ENCODE measurements at regions of chr1 and their contacts with region 1.

Region 1: DNA sequence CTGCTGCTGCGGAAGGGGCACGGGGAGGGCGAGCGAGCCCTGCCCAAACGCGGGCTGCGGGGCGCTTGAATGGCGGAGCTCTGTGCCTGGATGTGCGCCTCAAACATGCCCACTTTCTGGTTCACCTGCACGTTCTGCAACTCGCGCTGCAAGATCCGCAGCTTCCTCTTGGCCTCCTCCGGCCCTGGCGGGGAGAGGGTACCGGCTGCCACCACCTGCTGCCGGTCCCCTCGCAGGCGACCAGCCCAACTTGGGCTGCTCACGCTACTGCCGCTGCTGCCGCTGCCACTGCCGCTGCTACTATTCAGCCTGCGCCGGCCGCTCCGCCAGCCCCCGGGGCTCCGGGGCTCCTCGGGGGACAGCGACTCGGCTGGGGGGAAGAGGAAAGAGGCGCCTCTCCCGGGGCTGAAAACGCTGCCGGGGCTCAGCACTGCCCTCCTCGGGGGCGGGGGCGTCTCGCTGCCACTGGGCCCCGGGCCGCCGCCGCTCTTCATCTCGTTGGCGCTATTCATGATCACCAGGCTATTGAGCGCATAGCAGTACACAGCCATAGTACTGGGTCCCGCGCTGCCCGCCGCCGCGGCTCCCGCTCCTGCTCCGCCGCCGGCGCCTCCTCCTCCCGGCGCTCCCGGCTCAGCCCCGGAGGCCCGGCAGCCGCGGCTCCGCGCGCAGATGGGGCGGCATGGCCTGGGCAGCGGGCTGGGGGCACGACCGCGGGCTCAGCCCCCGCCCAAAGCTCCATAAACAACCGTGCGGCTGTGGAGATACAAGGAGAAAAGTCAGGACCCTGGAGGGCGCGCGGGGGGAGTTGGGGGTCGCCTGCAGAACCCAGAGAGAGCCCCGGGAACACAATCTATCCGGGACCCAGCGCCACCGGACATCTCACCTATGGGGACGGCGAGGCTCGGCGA is 1.9 kb downstream of the ITPKB start:
- DNase-seq: peak; percentile 43
- H3K4me3 ChIP-seq: peak overlapping the region; percentile 77
- H3K27ac ChIP-seq: peak overlapping the region; percentile 79
- H3K4me1 ChIP-seq: no peaks in the 10 kb centered on the region
- H3K27me3 ChIP-seq: no peaks in the 10 kb centered on the region
- CTCF ChIP-seq: no peak

Region 2: GRCh38 chr1:226547754-226548191 is 189.4 kb before region 1 on chr1:
- intact Hi-C with region 1: no loop called
- DNase-seq: peak; percentile 84
- H3K4me3 ChIP-seq: no peak overlapping the region
- H3K27ac ChIP-seq: no peak overlapping the region
- H3K4me1 ChIP-seq: peaks cover 23% of the 10 kb centered on the region
- H3K27me3 ChIP-seq: peaks cover 16% of the 10 kb centered on the region
- CTCF ChIP-seq: peak; percentile 73

Region 3: DNA sequence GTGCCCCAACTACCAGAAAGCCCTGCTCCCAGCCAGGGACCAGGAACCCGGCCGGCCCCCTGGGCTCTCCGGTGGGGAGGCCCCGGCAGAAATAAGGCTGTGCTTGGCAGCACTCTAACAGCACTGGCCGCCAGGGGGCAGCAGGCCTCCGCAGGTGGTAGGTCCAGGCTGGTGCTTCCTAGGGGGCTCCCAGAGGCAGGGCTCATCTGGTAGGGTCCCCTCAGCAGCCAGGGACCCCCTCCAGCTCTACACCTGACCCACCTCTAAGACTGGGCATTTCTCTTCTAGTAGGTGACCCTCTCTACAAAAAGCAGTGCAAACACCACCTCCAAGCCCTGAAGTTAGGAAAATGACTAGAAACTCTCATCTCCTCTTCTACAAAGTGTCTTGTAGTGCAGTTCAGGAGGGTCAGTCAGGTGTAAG is 103.0 kb before region 1 on chr1:
- intact Hi-C with region 1: loop called (anchors 10 kb)
- DNase-seq: peak; percentile 81
- H3K4me3 ChIP-seq: no peak overlapping the region
- H3K27ac ChIP-seq: no peak overlapping the region
- H3K4me1 ChIP-seq: peaks cover 8% of the 10 kb centered on the region
- H3K27me3 ChIP-seq: no peaks in the 10 kb centered on the region
- CTCF ChIP-seq: peak; percentile 87

Region 4: DNA sequence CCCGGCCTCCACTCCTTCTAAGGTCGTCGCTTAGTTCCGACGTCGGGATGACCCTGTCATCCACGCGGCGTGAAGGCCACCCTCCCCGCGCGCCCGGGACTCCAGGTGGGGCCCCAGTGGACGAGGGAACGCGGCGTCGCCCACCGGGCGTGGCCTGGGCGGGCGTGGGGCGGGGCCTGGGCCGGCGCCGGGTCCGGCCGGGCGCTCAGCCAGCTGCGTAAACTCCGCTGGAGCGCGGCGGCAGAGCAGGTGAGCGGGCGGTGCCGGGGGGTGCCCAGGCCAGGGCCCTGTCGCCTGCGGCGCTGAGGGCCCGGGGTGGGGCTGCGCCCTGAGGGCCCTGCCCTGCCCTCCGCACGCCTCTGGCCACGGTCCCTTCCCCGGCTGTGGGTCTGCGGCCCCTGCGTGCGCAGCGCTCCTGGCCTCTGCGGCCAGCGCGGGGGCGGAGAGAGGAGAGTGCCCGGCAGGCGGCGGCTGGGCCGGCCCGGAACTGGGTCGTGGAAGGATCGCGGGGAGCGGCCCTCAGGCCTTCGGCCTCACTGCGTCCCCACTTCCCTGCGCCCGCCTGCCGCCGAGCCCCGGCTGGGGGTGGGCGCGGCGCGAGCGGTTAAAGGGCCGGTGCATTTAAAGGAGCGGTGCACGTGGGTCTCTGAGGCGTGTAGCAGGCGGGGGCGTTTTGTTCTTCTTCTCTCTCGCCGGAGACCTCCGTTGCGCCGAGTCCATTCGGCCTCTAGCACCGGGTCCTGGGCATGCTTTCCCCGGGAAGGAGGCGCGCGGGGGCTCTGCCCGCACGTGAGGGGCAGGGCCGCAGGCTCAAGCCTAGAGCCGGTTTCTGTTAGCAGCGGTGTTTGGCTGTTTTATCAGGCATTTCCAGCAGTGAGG is 133.5 kb after region 1 on chr1 and contains the start of gene PSEN2:
- intact Hi-C with region 1: no loop called
- DNase-seq: peak; percentile 84
- H3K4me3 ChIP-seq: peak within 1 kb of the TSS; percentile 80
- H3K27ac ChIP-seq: peak within 1 kb of the TSS; percentile 68
- H3K4me1 ChIP-seq: no peaks in the 10 kb centered on the region
- H3K27me3 ChIP-seq: no peaks in the 10 kb centered on the region
- CTCF ChIP-seq: no peak
- total RNA-seq, gene PSEN2: 16.6 to 18.1 TPM

Region 5: DNA sequence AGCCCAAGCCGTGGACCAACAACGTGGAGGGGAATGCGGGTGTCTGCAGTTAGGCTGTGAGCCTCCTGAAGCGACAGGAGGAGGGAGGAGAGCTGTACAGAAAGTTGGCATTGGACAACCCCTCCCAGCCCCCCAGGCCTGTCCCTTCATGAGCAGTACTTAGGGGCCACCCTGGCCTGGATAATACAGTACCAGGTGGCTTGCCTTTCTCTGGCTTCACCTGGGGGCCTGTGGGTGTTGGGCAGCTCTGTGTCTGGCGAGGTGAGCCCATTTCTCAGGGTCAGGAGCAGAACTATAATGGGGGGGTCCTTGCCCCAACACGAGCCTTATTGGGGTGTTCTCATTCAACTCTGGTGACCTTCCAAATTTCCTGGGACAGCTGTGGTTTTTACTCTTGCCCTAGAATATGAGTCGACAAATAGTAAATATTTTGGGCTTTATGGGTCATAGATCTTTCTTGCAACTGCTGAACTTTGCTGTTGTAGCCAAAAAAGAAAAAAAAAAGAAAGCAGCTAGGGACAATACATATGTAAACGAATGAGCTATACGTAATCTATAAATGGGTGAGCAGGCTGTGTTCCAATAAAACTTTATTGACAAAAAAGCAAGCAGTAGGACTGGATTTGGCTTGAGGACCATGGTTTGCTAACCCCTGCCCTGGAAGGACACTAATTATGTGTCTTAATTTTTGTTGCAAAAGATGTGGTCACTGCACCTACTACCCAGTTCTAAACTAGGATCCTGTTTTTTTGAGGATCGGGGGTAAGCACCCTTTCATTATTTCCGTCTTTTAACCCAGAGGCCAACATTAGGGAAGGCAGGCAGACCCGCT is 214.3 kb after region 1 on chr1:
- intact Hi-C with region 1: no loop called
- DNase-seq: no peak
- H3K4me3 ChIP-seq: no peak overlapping the region
- H3K27ac ChIP-seq: no peak overlapping the region
- H3K4me1 ChIP-seq: peaks cover 7% of the 10 kb centered on the region
- H3K27me3 ChIP-seq: no peaks in the 10 kb centered on the region
- CTCF ChIP-seq: no peak

Measured in colonic mucosa (tissue), 4 donors.